B cell (primary cell): ENCODE measurements at regions of chr11 and their contacts with region 1.

Region 1: GRCh38 chr11:64688534-64688982 is 34.4 kb downstream of the NRXN2 start:
- DNase-seq: peak; percentile 94
- ATAC-seq: peak; percentile 95
- H3K4me3 ChIP-seq: peak overlapping the region; percentile 37 to 74 (median 63)
- H3K4me3 Mint-ChIP-seq: peak overlapping the region; percentile 88
- H3K27ac ChIP-seq: peak overlapping the region in 1 of 2 donors; percentile 5
- H3K27ac Mint-ChIP-seq: peak overlapping the region; percentile 88
- H3K4me1 ChIP-seq: peaks cover 14 to 23% of the 10 kb centered on the region in 2 donors
- H3K4me1 Mint-ChIP-seq: peaks cover 20% of the 10 kb centered on the region
- H3K27me3 ChIP-seq: peaks cover 0 to 18% (median 8%) of the 10 kb centered on the region in 4 experiments
- H3K27me3 Mint-ChIP-seq: peaks cover 15% of the 10 kb centered on the region
- CTCF ChIP-seq: peak; percentile 92

Region 2: DNA sequence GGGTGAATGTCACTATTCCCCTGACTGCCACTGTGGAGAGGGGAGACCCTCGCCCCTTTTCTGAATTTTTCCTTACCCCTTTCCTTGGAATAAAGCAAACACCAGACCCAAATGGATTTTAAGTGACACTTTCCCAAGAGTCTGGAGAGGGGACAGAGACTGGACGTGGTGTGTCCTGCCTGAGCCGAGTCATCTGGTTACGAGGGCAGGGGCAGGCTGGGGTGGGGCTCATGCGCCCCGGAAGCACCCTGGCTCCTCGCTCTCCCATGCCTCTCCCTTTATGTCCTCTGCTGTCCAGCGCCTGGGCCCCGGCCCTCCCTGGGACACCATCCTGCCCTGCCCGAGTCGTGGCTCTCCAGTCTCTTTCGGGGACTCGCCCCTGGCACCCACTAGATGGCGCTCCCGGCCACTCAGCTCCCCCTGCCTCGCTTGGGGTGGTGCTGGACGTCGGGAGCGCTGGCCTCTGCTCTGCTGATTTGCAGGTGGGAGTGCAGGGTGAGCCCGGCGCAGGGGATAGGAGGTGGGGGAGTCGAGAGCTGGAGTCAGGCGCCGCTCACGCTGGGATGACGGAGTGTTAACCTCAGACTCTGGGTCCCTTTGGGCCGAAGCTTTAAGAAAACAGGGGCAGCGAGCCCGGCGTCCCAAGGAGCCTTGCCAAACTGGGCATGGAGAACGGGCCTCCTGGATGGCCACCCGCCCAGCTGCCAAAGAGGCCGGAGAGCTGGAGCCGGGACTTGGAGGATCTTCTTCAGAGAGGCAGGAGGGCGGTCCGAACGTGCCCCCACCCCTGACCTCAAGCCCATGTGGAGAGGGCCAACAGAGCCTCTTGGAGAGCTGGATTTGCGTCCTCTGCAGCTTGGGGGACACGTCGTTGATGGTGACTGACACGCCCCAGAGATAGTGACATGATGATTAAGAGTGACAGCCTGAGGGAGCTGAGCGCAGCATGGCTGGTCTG is 239.7 kb before region 1 on chr11:
- CTCF ChIA-PET with region 1: interaction called, 15 read pairs
- POLR2A ChIA-PET with region 1: no interaction called
- intact Hi-C with region 1: no loop called
- DNase-seq: peak; percentile 80
- ATAC-seq: peak; percentile 61
- H3K4me3 ChIP-seq: peak overlapping the region; percentile 52 to 92 (median 55)
- H3K4me3 Mint-ChIP-seq: peak overlapping the region; percentile 94
- H3K27ac ChIP-seq: peak overlapping the region; percentile 39 to 83
- H3K27ac Mint-ChIP-seq: peak overlapping the region; percentile 83
- H3K4me1 ChIP-seq: peaks cover 25 to 34% of the 10 kb centered on the region in 2 donors
- H3K4me1 Mint-ChIP-seq: peaks cover 34% of the 10 kb centered on the region
- H3K27me3 ChIP-seq: no peaks in the 10 kb centered on the region
- H3K27me3 Mint-ChIP-seq: no peaks in the 10 kb centered on the region
- CTCF ChIP-seq: peak; percentile 76

Region 3: DNA sequence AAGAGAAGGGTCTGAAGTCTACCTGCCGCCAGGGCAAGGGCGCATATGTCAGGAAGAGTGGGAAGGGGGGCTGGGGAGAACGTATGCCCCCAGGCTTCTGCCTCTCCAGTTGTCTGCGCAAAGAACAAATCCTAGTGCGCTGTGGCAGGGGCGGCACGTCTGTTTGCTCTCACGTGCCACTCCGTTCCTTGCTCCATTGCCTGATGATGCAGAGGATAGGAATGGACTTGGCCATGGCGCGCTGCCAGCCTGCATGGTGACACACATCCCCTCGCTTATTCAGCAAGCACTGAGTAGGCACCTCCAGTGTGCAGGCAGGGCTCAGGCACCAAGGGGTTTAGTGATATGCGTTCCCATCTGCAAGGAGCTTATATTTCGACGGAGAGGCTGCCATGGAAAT is 143.0 kb before region 1 on chr11:
- CTCF ChIA-PET with region 1: no interaction called
- POLR2A ChIA-PET with region 1: no interaction called
- intact Hi-C with region 1: no loop called
- DNase-seq: no peak
- ATAC-seq: no peak
- H3K4me3 ChIP-seq: no peak overlapping the region
- H3K4me3 Mint-ChIP-seq: no peak overlapping the region
- H3K27ac ChIP-seq: no peak overlapping the region
- H3K27ac Mint-ChIP-seq: no peak overlapping the region
- H3K4me1 ChIP-seq: no peaks in the 10 kb centered on the region
- H3K4me1 Mint-ChIP-seq: no peaks in the 10 kb centered on the region
- H3K27me3 ChIP-seq: peaks cover 0 to 1% (median 0%) of the 10 kb centered on the region in 4 experiments
- H3K27me3 Mint-ChIP-seq: peaks cover 20% of the 10 kb centered on the region
- CTCF ChIP-seq: no peak

Region 4: GRCh38 chr11:64652586-64653387 is 35.8 kb before region 1 on chr11:
- CTCF ChIA-PET with region 1: interaction called, 35 read pairs
- POLR2A ChIA-PET with region 1: no interaction called
- intact Hi-C with region 1: no loop called
- DNase-seq: peak; percentile 78
- ATAC-seq: peak; percentile 51
- H3K4me3 ChIP-seq: no peak overlapping the region
- H3K4me3 Mint-ChIP-seq: no peak overlapping the region
- H3K27ac ChIP-seq: no peak overlapping the region
- H3K27ac Mint-ChIP-seq: no peak overlapping the region
- H3K4me1 ChIP-seq: peaks cover 17 to 33% of the 10 kb centered on the region in 2 donors
- H3K4me1 Mint-ChIP-seq: peaks cover 28% of the 10 kb centered on the region
- H3K27me3 ChIP-seq: peaks cover 0 to 4% (median 0%) of the 10 kb centered on the region in 4 experiments
- H3K27me3 Mint-ChIP-seq: peaks cover 3% of the 10 kb centered on the region
- CTCF ChIP-seq: peak; percentile 70

Region 5: DNA sequence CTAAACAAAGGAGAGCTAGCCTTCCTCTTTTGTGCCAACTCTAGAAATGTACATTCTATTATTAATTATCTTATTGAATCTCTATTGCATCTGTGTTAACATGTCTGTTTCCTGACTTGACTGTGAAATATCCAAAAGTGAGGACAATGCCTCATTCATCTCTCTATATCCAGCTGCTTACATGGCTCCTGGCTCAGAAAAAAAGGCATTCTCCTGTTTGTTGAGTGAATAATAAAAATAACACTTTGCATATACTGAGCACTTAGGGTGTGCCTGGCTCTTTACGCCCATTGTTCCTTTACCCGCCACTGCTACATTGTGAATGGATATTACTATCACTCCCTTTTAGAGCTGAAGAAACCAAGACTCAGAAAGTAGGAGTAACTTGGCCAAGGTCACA is 14.5 kb after region 1 on chr11:
- CTCF ChIA-PET with region 1: interaction called, 44 read pairs
- POLR2A ChIA-PET with region 1: interaction called, 6 read pairs
- intact Hi-C with region 1: no loop called
- DNase-seq: no peak
- ATAC-seq: no peak
- H3K4me3 ChIP-seq: no peak overlapping the region
- H3K4me3 Mint-ChIP-seq: no peak overlapping the region
- H3K27ac ChIP-seq: no peak overlapping the region
- H3K27ac Mint-ChIP-seq: no peak overlapping the region
- H3K4me1 ChIP-seq: no peaks in the 10 kb centered on the region
- H3K4me1 Mint-ChIP-seq: no peaks in the 10 kb centered on the region
- H3K27me3 ChIP-seq: peaks cover 0 to 11% (median 5%) of the 10 kb centered on the region in 4 experiments
- H3K27me3 Mint-ChIP-seq: peaks cover 41% of the 10 kb centered on the region
- CTCF ChIP-seq: no peak

Region 6: GRCh38 chr11:64723117-64723906 is 34.8 kb after region 1 on chr11 and contains the start of gene NRXN2:
- CTCF ChIA-PET with region 1: interaction called, 15 read pairs
- POLR2A ChIA-PET with region 1: interaction called, 4 read pairs
- intact Hi-C with region 1: loop called (anchors 1 kb)
- DNase-seq: peak; percentile 89
- ATAC-seq: peak; percentile 92
- H3K4me3 ChIP-seq: peak within 1 kb of the TSS in 4 of 5 experiments; percentile 67 to 83 (median 76)
- H3K4me3 Mint-ChIP-seq: peak within 1 kb of the TSS; percentile 86
- H3K27ac ChIP-seq: peak within 1 kb of the TSS; percentile 64 to 83
- H3K27ac Mint-ChIP-seq: peak within 1 kb of the TSS; percentile 86
- H3K4me1 ChIP-seq: peaks cover 13 to 23% of the 10 kb centered on the region in 2 donors
- H3K4me1 Mint-ChIP-seq: peaks cover 25% of the 10 kb centered on the region
- H3K27me3 ChIP-seq: peaks cover 0 to 36% (median 10%) of the 10 kb centered on the region in 4 experiments
- H3K27me3 Mint-ChIP-seq: peaks cover 31% of the 10 kb centered on the region
- CTCF ChIP-seq: peak; percentile 99
- total RNA-seq, gene NRXN2: 0.52 TPM in 1 of 2 replicates, not detected in the other

Region 7: DNA sequence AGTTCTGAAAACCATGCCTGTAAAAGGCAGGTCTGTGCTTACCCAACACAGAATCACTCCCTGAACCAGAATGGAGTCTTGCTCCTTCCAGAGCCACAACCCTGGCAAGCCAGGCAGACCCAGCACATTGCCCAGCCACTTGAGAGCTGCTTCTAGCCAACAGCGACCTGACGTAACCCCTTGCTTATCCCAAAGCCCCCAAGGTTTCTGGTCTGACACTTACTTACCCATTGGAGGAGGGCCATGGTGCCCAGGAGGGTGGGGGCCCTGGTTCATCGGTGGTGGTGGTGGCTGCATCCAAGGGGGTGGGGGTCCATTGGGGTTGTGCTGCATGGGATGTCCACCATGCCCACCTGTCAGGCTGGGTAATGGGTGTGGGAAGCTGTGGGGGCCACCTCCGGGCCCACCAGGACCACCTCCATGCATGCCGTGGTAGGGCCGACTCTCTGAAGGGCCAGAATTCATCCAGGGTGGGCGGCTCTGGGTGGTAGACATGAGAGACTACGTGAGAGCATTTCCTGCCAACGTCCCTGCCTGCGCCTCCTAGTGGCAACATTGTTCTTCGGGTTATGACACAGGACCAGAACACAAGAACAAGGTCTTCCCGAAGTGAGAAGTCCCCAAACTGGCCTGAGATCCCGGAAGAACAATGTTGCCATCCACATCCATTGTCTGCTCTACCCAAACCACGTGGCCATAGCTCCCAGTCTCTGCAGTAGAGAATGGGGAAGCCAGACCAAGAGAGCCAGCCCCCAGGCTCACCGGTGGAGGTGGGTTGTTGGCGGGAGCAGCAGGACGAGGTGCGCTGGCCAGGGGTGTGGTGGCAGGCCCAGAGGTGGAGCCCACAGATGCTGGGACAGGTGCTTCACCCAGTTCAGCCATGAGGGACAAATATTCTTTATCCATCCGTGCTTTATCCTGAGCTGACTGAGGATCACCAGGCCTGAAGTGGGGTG is 79.1 kb after region 1 on chr11:
- CTCF ChIA-PET with region 1: interaction called, 12 read pairs
- POLR2A ChIA-PET with region 1: interaction called, 3 read pairs
- intact Hi-C with region 1: no loop called
- DNase-seq: peak; percentile 82
- ATAC-seq: no peak
- H3K4me3 ChIP-seq: no peak overlapping the region
- H3K4me3 Mint-ChIP-seq: peak overlapping the region; percentile 66
- H3K27ac ChIP-seq: peak overlapping the region; percentile 64 to 75
- H3K27ac Mint-ChIP-seq: peak overlapping the region; percentile 92
- H3K4me1 ChIP-seq: peaks cover 85 to 96% of the 10 kb centered on the region in 2 donors
- H3K4me1 Mint-ChIP-seq: peaks cover 91% of the 10 kb centered on the region
- H3K27me3 ChIP-seq: no peaks in the 10 kb centered on the region
- H3K27me3 Mint-ChIP-seq: no peaks in the 10 kb centered on the region
- CTCF ChIP-seq: peak; percentile 90

Region 8: DNA sequence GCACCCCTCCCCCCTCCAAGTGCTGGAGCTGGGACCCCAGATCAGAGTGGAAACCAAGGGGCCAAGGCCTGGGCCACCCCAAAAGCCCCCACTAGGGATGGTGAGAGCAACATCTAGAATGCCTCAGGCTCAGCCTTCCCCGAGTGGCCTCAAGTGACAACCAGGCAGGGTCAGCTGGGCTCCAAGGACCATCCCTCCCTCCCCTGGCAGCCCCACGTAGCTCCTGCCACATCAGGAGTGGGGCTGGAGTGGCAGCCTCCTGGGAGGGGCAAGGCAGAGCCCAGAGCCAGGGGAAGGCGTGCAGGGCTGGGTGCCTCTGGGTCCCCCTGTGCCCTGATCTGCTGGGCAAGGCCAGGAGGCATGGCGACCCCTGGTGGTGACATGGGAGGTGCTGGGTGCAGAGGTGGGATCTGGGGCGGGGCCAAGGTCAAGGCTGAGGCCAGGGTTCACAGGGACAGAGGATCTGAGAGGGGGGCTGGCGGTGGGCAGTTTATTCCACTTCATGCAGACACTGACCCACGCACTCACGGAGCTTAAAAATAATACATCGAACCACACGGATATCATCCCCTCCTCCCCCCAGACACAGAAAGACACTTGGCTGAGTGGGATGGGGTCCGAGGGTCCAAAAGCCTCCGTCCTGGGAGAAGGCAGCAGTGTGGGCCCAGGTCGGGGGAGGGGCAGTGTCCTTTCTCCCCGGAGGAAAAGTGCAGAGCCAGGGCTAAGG is 205.7 kb after region 1 on chr11:
- CTCF ChIA-PET with region 1: no interaction called
- POLR2A ChIA-PET with region 1: no interaction called
- intact Hi-C with region 1: no loop called
- DNase-seq: peak; percentile 91
- ATAC-seq: peak; percentile 98
- H3K4me3 ChIP-seq: no peak overlapping the region
- H3K4me3 Mint-ChIP-seq: no peak overlapping the region
- H3K27ac ChIP-seq: no peak overlapping the region
- H3K27ac Mint-ChIP-seq: peak overlapping the region; percentile 64
- H3K4me1 ChIP-seq: peaks cover 22 to 30% of the 10 kb centered on the region in 2 donors
- H3K4me1 Mint-ChIP-seq: peaks cover 16% of the 10 kb centered on the region
- H3K27me3 ChIP-seq: no peaks in the 10 kb centered on the region
- H3K27me3 Mint-ChIP-seq: no peaks in the 10 kb centered on the region
- CTCF ChIP-seq: peak; percentile 87